Left ventricle myocardium inferior (tissue), 1 donor: ENCODE measurements at regions of chr3 and their contacts with region 1.

Region 1: GRCh38 chr3:30199096-30199759 is 407.2 kb upstream of the TGFBR2 start:
- DNase-seq: peak; percentile 76
- H3K4me3 ChIP-seq: no peak overlapping the region
- H3K27ac ChIP-seq: peak overlapping the region; percentile 39
- H3K4me1 ChIP-seq: peaks cover 27% of the 10 kb centered on the region
- H3K27me3 ChIP-seq: no peaks in the 10 kb centered on the region
- CTCF ChIP-seq: peak; percentile 90

Region 2: DNA sequence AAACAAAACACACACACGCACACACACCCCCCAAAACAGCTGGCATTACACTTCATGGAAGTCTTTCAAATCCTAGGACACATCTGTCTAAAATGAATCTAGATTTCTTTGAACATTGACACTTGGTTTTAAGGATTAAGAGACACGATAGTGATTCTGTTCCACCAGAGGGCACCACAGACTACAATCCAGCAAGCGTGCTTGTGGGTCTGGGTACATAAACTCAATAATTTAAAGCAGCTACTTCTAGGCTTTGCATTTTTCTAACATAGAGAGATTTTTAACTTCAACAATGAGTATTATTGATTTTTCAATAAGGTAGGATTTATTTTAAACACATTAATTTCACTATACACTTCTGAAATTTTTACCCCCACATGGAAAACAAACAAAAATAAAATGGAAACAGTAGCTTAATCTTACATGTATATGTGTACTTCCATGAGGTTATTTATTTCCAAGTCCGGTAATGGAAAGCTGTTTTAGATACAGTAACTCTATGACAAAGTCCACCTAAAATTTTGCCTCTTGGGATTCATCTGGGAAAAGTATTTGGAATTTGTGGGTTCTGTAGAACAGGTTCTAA is 156.9 kb before region 1 on chr3:
- intact Hi-C with region 1: loop called (anchors 5 kb)
- DNase-seq: peak; percentile 22
- H3K4me3 ChIP-seq: no peak overlapping the region
- H3K27ac ChIP-seq: no peak overlapping the region
- H3K4me1 ChIP-seq: no peaks in the 10 kb centered on the region
- H3K27me3 ChIP-seq: no peaks in the 10 kb centered on the region
- CTCF ChIP-seq: peak; percentile 87

Region 3: GRCh38 chr3:30112902-30113484 is 86.2 kb before region 1 on chr3:
- intact Hi-C with region 1: loop called (anchors 5 kb)
- DNase-seq: no peak
- H3K4me3 ChIP-seq: no peak overlapping the region
- H3K27ac ChIP-seq: no peak overlapping the region
- H3K4me1 ChIP-seq: peaks cover 28% of the 10 kb centered on the region
- H3K27me3 ChIP-seq: no peaks in the 10 kb centered on the region
- CTCF ChIP-seq: peak; percentile 75

Region 4: DNA sequence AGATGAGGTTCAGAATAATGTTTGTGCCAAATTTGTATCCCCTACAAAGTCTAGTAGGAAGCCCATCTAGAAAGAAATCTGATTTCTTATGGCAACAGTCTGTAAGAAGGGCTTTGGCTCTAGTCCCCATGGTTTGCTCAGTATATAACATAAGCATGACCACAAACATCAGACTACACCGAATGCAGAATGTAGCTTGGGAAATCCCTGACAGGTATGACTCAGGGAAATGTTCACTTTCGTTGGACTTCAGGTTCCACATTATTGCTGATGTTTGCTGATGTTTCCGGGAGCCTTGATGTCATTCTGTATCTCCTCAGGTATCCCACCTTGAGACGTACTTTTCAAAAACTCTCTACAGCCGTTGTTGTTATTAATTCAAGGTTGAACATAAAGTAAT is 102.8 kb after region 1 on chr3:
- intact Hi-C with region 1: no loop called
- DNase-seq: no peak
- H3K4me3 ChIP-seq: no peak overlapping the region
- H3K27ac ChIP-seq: no peak overlapping the region
- H3K4me1 ChIP-seq: no peaks in the 10 kb centered on the region
- H3K27me3 ChIP-seq: no peaks in the 10 kb centered on the region
- CTCF ChIP-seq: no peak

Region 5: DNA sequence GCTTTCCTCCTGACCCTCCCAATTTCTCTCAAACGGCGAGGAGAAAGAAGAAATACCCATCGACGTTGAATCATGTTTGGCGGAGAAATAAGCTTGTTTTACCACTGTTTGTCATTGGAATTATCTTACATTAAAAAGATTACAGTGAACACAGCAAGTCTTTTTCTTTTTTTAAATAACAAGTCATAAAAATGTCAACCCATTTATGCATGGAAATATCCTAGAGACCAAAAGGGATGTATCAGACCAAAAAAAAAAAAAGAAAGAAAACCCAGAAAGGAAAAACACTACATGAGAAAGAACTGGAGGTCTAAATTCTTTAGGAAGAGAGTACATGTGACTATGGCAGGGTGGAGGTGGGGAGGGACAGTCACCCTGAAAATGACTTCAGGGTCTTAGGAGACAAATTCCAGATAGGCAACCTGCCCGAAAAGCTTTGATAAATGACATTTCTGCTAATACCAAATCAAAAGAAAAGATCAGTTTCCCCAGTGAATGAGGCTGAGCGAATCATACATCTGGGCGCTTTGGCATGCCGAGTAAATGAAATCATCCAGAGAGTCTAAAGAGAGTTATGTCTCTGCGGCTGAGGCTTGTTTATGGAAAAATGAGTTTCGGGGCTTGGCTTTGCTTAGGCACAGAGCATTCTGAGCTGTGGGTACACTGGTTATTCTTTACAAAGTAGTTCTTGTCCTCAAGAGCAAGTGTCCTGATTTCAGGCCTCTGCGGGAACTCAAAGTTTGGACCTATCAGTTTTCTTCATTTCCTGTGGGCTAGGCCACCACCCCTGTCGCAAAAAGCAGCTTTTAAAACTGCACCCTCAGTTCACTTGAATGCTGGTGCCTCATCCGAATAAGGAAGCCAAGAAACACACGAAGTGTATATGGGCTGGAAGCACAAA is 297.1 kb after region 1 on chr3:
- intact Hi-C with region 1: no loop called
- DNase-seq: peak; percentile 26
- H3K4me3 ChIP-seq: no peak overlapping the region
- H3K27ac ChIP-seq: peak overlapping the region; percentile 80
- H3K4me1 ChIP-seq: peaks cover 64% of the 10 kb centered on the region
- H3K27me3 ChIP-seq: no peaks in the 10 kb centered on the region
- CTCF ChIP-seq: no peak

Region 6: DNA sequence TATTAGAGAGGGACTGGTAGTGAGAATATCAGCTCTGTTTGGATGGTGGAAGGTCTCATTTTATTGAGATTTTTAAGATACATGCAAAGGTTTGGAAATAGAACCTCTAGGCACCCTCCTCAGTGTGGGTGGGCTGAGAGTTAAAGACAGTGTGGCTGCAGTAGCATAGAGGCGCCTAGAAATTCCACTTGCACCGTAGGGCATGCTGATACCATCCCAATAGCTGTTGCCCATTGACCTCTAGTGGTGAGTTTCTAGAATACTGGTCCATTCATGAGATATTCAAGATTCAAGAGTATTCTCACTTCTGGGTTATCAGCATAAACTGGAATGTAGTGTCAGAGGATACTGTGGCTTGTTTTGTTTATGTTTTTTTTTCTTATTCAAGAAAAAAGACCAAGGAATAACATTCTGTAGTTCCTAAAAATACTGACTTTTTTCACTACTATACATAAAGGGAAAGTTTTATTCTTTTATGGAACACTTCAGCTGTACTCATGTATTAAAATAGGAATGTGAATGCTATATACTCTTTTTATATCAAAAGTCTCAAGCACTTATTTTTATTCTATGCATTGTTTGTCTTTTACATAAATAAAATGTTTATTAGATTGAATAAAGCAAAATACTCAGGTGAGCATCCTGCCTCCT is 494.4 kb after region 1 on chr3:
- intact Hi-C with region 1: loop called (anchors 10 kb)
- DNase-seq: no peak
- H3K4me3 ChIP-seq: no peak overlapping the region
- H3K27ac ChIP-seq: peak overlapping the region; percentile 79
- H3K4me1 ChIP-seq: peaks cover 89% of the 10 kb centered on the region
- H3K27me3 ChIP-seq: no peaks in the 10 kb centered on the region
- CTCF ChIP-seq: peak; percentile 90